ENCODE measurements at regions of chr10 and their contacts with region 1.

Region 1: GRCh38 chr10:58237014-58237830 is 30.5 kb downstream of the IPMK start:
- DNase-seq: no peak
- ATAC-seq: no peak
- H3K4me3 Mint-ChIP-seq: no peak overlapping the region
- H3K27ac Mint-ChIP-seq: peak overlapping the region; percentile 20
- H3K4me1 Mint-ChIP-seq: peaks cover 56% of the 10 kb centered on the region
- H3K27me3 Mint-ChIP-seq: no peaks in the 10 kb centered on the region
- CTCF ChIP-seq: no peak

Region 2: DNA sequence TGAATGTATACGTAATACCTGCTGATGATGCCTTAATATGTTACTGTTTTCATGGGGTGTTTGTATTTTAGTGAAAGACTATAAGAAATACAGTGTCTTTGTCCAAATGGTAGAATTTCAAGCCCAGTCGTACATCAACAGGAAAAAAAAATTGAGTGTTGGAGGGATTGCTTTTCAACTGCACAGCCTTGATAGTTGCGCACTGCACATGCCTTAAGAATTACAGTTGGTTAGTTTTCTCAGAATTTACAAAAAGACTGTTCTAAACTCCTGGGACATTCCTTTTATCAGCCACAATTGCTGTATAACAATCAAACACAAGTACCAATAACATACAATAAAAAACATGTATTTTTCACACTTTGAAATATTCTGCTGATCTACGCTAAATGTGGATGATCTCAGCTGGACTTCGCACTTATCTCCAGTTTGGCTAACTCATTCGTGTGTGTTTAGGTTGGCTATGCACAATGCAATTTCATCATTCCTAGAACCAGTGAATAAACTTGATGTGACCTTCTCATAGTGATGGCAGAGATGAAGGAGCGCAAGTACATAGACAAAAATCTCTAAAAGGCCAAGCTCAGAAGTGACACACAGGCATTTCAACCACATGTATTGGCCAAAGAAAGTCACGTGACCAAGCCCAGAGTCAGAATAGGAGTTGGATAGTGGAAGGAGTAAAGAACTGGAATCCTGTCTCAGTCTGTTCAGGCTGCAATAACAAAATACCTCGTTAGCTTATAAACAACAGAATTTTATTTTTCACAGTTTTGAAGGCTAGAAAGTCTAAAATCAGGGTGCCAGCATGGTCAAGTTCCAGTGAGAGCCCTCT is 121.8 kb before region 1 on chr10:
- CTCF ChIA-PET with region 1: no interaction called
- POLR2A ChIA-PET with region 1: no interaction called
- intact Hi-C with region 1: no loop called
- DNase-seq: no peak
- ATAC-seq: no peak
- H3K4me3 Mint-ChIP-seq: no peak overlapping the region
- H3K27ac Mint-ChIP-seq: no peak overlapping the region
- H3K4me1 Mint-ChIP-seq: no peaks in the 10 kb centered on the region
- H3K27me3 Mint-ChIP-seq: peaks cover 3% of the 10 kb centered on the region
- CTCF ChIP-seq: no peak

Region 3: GRCh38 chr10:58225654-58226053 is 11.6 kb before region 1 on chr10:
- CTCF ChIA-PET with region 1: no interaction called
- POLR2A ChIA-PET with region 1: no interaction called
- intact Hi-C with region 1: loop called (anchors 2 kb)
- DNase-seq: no peak
- ATAC-seq: no peak
- H3K4me3 Mint-ChIP-seq: no peak overlapping the region
- H3K27ac Mint-ChIP-seq: no peak overlapping the region
- H3K4me1 Mint-ChIP-seq: no peaks in the 10 kb centered on the region
- H3K27me3 Mint-ChIP-seq: no peaks in the 10 kb centered on the region
- CTCF ChIP-seq: no peak

Region 4: DNA sequence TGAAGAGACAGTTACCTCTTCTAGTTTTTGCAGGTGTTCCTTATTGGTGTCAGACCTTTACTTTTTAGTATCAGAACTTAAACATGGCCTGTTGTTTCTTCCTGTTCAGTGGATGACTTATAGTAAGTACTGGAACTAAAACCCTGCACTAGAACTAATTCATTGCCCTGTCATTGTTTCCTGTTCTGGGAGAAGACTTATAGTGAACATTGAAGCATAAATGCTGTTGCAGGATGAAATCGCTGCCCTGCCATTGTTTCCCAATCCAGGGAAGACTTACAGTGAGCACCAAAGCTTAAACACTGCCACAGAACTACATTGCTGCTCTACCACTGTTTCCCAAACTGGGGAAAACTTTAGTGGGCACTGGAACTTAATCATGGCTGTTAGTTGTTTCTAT is 17.4 kb after region 1 on chr10:
- CTCF ChIA-PET with region 1: no interaction called
- POLR2A ChIA-PET with region 1: no interaction called
- intact Hi-C with region 1: loop called (anchors 2 kb)
- DNase-seq: no peak
- ATAC-seq: no peak
- H3K4me3 Mint-ChIP-seq: no peak overlapping the region
- H3K27ac Mint-ChIP-seq: no peak overlapping the region
- H3K4me1 Mint-ChIP-seq: peaks cover 39% of the 10 kb centered on the region
- H3K27me3 Mint-ChIP-seq: no peaks in the 10 kb centered on the region
- CTCF ChIP-seq: no peak

Region 5: GRCh38 chr10:58282615-58283014 is 45.4 kb after region 1 on chr10:
- CTCF ChIA-PET with region 1: no interaction called
- POLR2A ChIA-PET with region 1: no interaction called
- intact Hi-C with region 1: loop called (anchors 5 kb)
- DNase-seq: no peak
- ATAC-seq: peak; percentile 90
- H3K4me3 Mint-ChIP-seq: peak overlapping the region; percentile 57
- H3K27ac Mint-ChIP-seq: peak overlapping the region; percentile 88
- H3K4me1 Mint-ChIP-seq: peaks cover 27% of the 10 kb centered on the region
- H3K27me3 Mint-ChIP-seq: no peaks in the 10 kb centered on the region
- CTCF ChIP-seq: no peak